ENCODE measurements at regions of chr12 and their contacts with region 1.

Region 1: GRCh38 chr12:47397664-47398281 is 308.1 kb downstream of the RPAP3 start:
- DNase-seq: no peak

Region 2: DNA sequence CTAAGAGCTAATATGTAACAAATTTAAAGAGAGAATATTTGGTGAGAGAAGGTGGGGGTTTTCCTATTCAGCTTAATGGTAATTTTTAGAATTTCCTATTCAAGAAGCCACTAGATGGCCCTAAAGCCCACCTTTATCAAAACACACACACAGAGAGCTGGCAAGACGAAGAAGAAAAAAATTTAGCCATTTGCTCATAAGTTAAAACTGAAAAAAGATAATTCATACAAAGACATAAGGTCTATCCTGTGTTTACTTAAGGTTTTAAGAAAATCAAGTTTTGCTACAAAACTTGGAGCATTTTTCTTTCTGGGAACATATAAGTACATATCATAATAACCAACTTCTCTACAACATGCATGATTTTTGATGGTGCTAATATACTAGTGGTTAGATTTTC is 365.1 kb before region 1 on chr12:
- intact Hi-C with region 1: loop called in 1 of 2 experiments (anchors 10 kb)
- DNase-seq: no peak

Measured in posterior vena cava (tissue), 2 donors.